Activated naive CD4-positive, alpha-beta T cell treated with anti-CD3 and anti-CD28 coated beads for 36 hours (primary cell): ENCODE measurements at regions of chr9 and their contacts with region 1.

Region 1: GRCh38 chr9:70494221-70494620 is 79.8 kb upstream of the KLF9 start:
- DNase-seq: no peak
- H3K4me3 Mint-ChIP-seq: no peak overlapping the region
- H3K27ac Mint-ChIP-seq: peak overlapping the region; percentile 6
- H3K4me1 Mint-ChIP-seq: peaks cover 17% of the 10 kb centered on the region
- H3K27me3 Mint-ChIP-seq: peaks cover 4% of the 10 kb centered on the region

Region 2: DNA sequence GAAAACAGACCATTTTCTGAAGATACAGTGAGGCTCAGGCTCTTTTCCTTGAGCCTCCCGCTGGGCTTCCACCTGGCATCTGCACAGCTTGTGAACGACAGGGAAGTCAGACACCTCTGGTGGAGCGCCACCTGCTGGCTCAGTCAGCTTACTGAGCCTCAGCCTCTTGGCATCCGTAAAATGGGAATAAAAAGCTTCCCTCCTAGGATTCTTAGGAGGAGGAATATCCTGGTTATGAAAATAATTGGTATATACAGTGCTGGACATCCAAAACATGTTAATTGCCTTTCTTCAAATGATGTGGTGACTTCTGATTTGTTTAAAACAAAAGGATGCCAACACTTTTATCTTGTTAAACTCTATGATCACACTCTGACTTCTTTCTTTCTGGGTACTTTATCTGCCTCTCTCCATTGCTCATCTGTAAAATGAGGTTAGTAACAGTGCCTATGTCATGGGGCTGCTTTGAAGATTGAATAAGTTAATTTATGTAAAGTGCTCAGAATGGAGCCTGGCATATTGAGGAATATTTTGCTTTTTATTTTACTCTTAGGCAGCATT is 383.1 kb before region 1 on chr9:
- CTCF ChIA-PET with region 1: interaction called, 3 read pairs
- intact Hi-C with region 1: loop called (anchors 10 kb)
- DNase-seq: peak; percentile 76
- H3K4me3 Mint-ChIP-seq: peak overlapping the region; percentile 22
- H3K27ac Mint-ChIP-seq: no peak overlapping the region
- H3K4me1 Mint-ChIP-seq: peaks cover 9% of the 10 kb centered on the region
- H3K27me3 Mint-ChIP-seq: peaks cover 3% of the 10 kb centered on the region

Region 3: GRCh38 chr9:70340572-70340971 is 153.6 kb before region 1 on chr9:
- CTCF ChIA-PET with region 1: interaction called, 8 read pairs
- intact Hi-C with region 1: loop called (anchors 2 kb)
- DNase-seq: no peak
- H3K4me3 Mint-ChIP-seq: no peak overlapping the region
- H3K27ac Mint-ChIP-seq: no peak overlapping the region
- H3K4me1 Mint-ChIP-seq: no peaks in the 10 kb centered on the region
- H3K27me3 Mint-ChIP-seq: no peaks in the 10 kb centered on the region